AG04450 (cell line): ENCODE measurements at regions of chr5 and their contacts with region 1.

Region 1: DNA sequence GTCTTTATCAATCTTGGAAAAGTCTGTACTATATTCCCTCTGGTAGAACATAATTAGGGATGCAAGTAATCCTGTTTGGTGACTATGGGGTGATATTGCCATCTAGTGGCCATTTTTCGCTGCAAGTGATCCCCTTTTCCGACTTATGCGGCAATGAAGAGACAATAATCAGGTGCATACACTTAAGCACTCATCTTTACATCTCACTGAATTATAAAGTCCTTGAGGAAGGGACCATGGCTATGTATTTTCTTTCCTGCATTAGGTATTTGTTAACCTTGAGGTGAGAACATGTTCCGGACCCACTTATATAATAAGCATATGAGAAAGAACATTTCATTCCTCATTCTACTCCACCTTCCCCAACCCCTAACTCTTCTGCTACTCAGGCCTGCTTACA is 19.6 kb upstream of the LIX1 start:
- DNase-seq: peak; percentile 69
- H3K4me3 ChIP-seq: no peak overlapping the region
- H3K27ac ChIP-seq: no peak overlapping the region
- H3K27me3 ChIP-seq: no peaks in the 10 kb centered on the region
- CTCF ChIP-seq: peak; percentile 93

Region 2: DNA sequence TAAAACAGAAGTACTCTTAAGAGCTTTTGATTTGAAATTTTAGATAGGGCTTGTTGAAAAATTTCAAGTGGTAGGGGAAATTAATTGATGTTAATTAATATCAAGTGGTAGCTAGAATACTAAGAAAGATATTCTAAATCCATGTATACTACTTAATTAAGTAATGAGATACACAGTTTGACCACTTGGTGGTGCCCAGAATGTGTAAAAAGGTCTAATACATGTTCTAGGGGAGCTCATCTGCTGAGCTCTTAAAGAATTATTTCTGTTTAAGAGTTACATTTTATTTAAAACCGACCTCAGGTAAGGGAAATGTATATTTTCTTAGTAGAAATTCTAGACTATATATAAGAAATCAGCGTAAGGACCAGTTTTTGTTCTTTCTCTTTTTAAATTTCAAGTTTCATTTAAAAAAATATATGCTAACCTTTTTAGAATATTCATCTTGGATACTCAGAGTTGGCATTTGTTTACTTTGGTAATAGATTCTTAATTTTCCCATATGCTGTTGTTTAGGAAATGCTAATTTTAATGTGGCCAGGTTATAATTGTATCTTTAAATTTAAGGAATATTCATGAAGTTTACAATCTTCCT is 164.7 kb before region 1 on chr5:
- CTCF ChIA-PET with region 1: interaction called, 54 read pairs
- POLR2A ChIA-PET with region 1: no interaction called
- DNase-seq: no peak
- H3K4me3 ChIP-seq: no peak overlapping the region
- H3K27ac ChIP-seq: no peak overlapping the region
- H3K27me3 ChIP-seq: no peaks in the 10 kb centered on the region
- CTCF ChIP-seq: peak; percentile 51

Region 3: GRCh38 chr5:97078958-97079743 is 82.9 kb before region 1 on chr5:
- CTCF ChIA-PET with region 1: no interaction called
- POLR2A ChIA-PET with region 1: no interaction called
- DNase-seq: no peak
- H3K4me3 ChIP-seq: no peak overlapping the region
- H3K27ac ChIP-seq: no peak overlapping the region
- H3K27me3 ChIP-seq: peaks cover 12% of the 10 kb centered on the region
- CTCF ChIP-seq: no peak

Region 4: DNA sequence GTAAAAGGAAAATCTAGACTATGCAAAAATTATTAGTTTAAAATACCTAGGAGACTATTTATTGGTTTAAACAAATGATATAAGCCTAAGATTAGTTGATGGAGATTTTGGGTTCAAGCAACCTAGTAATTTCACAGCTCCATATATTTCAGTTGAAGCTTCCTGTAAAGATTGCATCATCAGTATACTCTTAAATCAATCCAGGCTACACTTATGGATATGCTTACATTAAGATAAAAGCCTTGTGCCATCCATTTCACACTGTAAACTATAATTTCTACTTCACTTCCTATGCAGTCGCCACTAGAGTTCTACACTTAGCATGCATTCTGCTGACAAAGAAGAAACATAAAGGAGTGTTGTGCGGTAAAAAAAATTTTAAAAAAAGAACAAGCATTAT is 12.3 kb before region 1 on chr5:
- CTCF ChIA-PET with region 1: interaction called, 14 read pairs
- POLR2A ChIA-PET with region 1: no interaction called
- DNase-seq: no peak
- H3K4me3 ChIP-seq: no peak overlapping the region
- H3K27ac ChIP-seq: no peak overlapping the region
- H3K27me3 ChIP-seq: peaks cover 2% of the 10 kb centered on the region
- CTCF ChIP-seq: no peak